ENCODE measurements at regions of chr2 and their contacts with region 1.

Region 1: GRCh38 chr2:140797718-140798117 is 1333.1 kb downstream of the LRP1B start:
- DNase-seq: no peak
- H3K4me3 ChIP-seq: no peak overlapping the region
- H3K27ac ChIP-seq: no peak overlapping the region
- H3K4me1 ChIP-seq: no peaks in the 10 kb centered on the region
- H3K27me3 ChIP-seq: no peaks in the 10 kb centered on the region
- CTCF ChIP-seq: no peak
- EP300 ChIP-seq: no peak
- POLR2A ChIP-seq: no peak
- RAD21 ChIP-seq: no peak

Region 2: GRCh38 chr2:140808816-140809215 is 11.1 kb after region 1 on chr2:
- CTCF ChIA-PET with region 1: interaction called, 11 read pairs
- POLR2A ChIA-PET with region 1: no interaction called
- DNase-seq: no peak
- H3K4me3 ChIP-seq: no peak overlapping the region
- H3K27ac ChIP-seq: no peak overlapping the region
- H3K4me1 ChIP-seq: no peaks in the 10 kb centered on the region
- H3K27me3 ChIP-seq: no peaks in the 10 kb centered on the region
- CTCF ChIP-seq: peak in 2 of 3 experiments; percentile 42 to 50; a peak in 3 of 4 replicates
- EP300 ChIP-seq: no peak
- POLR2A ChIP-seq: no peak
- RAD21 ChIP-seq: peak; percentile 48 to 53; a peak in 3 of 4 replicates

Region 3: GRCh38 chr2:140851258-140851981 is 53.7 kb after region 1 on chr2:
- CTCF ChIA-PET with region 1: no interaction called
- POLR2A ChIA-PET with region 1: no interaction called
- DNase-seq: no peak
- H3K4me3 ChIP-seq: no peak overlapping the region
- H3K27ac ChIP-seq: no peak overlapping the region
- H3K4me1 ChIP-seq: no peaks in the 10 kb centered on the region
- H3K27me3 ChIP-seq: no peaks in the 10 kb centered on the region
- CTCF ChIP-seq: no peak
- EP300 ChIP-seq: no peak
- POLR2A ChIP-seq: no peak
- RAD21 ChIP-seq: no peak

Measured in H1 (cell line).